ENCODE measurements at regions of chr5 and their contacts with region 1.

Region 1: DNA sequence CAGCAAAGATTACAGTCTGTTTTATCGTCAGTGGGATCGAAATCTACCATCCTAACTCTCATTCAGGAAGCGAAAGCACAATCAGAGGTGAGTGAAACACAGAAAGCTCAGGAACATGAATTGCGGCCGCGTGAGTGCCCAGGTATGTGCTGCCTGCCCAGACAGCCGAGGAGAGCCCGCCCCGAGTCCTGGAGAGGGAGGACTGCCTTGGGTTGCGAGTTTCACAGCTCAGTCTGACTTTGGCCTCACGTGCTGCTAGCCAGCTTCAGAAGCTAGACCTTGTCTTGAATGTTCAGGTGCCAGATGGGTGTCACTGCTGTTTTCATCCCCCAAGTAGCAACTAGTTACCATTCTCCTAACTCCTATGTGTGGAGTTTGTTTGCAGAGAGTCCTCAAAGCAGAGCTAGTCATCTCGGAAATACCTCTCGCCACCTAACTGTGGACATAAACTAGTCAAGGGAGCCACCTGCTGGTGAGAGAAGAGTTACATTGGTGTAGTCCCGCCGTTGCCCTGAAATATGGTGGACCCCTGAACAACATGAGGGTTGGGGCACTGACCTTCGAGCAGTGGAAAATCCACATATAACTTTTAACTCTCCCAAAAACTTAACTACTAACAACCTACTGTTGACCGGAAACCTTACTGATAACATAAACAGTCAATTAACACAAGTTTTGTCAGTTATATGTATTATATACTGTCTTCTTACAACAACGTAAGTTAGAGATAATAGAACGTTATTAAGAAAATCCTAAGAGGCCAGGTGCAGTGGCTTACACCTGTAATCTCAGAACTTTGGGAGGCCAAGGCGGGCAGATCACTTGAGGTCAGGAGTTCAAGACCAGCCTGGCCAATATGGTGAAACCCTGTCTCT is 80.9 kb downstream of the GOLPH3 start:
- DNase-seq: peak; percentile 86
- H3K4me3 ChIP-seq: no peak overlapping the region
- H3K27ac ChIP-seq: no peak overlapping the region
- H3K4me1 ChIP-seq: peaks cover 4% of the 10 kb centered on the region
- H3K27me3 ChIP-seq: no peaks in the 10 kb centered on the region
- CTCF ChIP-seq: peak; percentile 86

Region 2: DNA sequence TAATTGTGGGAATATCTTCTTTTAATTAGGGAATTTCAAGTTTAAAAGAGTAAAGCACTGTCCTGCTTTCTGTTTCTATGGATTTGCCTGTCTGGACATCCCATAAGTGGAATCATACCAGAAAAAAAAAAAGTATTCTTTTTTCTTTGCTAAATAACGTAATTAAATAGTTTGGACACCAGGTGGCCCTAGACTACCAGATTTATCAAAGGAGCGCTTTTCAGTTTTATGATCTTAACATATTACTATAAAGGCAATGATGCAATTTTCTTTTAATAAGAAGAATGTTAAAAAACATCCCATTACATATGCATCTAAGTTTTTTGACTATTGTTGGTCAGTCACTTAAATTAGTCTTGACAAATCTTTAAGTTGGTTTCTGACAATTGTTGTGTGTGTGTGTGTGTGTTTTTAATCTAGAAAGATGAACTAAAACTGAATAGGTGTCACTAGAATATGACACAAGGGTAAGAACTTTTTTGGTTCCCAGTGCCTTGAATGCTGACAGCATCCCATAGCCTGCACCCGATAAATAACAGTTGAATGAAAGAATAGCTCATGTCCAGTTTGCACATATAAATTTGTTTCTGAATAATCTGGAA is 511.6 kb before region 1 on chr5:
- CTCF ChIA-PET with region 1: interaction called, 4 read pairs
- POLR2A ChIA-PET with region 1: no interaction called
- intact Hi-C with region 1: loop called (anchors 2 kb)
- DNase-seq: peak; percentile 63
- H3K4me3 ChIP-seq: no peak overlapping the region
- H3K27ac ChIP-seq: no peak overlapping the region
- H3K4me1 ChIP-seq: no peaks in the 10 kb centered on the region
- H3K27me3 ChIP-seq: no peaks in the 10 kb centered on the region
- CTCF ChIP-seq: peak; percentile 65

Region 3: DNA sequence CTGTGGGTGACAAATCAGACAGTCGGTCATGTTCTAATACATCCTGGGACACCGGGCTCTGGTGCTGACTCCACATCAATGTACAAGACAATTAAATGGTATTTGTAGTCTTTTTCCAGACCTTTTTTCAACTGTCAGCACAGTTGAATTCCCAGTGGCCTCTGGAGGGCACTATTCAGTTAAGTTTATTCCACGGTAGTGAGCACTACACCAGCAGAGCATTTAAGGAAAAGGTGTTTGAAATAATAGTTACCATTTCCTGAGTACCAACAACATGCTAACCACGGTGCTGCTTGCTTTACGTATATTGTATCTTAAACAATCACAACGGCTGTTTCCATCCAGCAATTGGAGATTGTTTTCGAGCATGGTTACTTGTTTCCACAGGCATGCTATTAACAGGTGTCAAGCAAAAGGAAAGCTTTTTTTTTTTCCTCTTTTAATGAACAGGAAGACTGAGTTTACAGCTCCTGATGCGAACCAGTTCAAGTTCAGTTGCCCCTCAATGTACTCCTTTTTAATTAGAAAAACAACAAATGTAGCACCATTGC is 267.6 kb before region 1 on chr5:
- CTCF ChIA-PET with region 1: interaction called, 16 read pairs
- POLR2A ChIA-PET with region 1: no interaction called
- intact Hi-C with region 1: loop called (anchors 1 kb)
- DNase-seq: peak; percentile 79
- H3K4me3 ChIP-seq: no peak overlapping the region
- H3K27ac ChIP-seq: no peak overlapping the region
- H3K4me1 ChIP-seq: no peaks in the 10 kb centered on the region
- H3K27me3 ChIP-seq: no peaks in the 10 kb centered on the region
- CTCF ChIP-seq: peak; percentile 83

Measured in A673 (cell line).